Activated CD8-positive, alpha-beta memory T cell treated with anti-CD3 and anti-CD28 coated beads, Interleukin-2, amount 10 ng/mL, durations not matched to agents 7 days and 5 days (primary cell): ENCODE measurements at regions of chr2 and their contacts with region 1.

Region 1: GRCh38 chr2:25331686-25332365 is 9.9 kb downstream of the DNMT3A start:
- DNase-seq: no peak
- ATAC-seq: no peak
- H3K4me3 Mint-ChIP-seq: no peak overlapping the region
- H3K27ac Mint-ChIP-seq: no peak overlapping the region
- H3K4me1 Mint-ChIP-seq: peaks cover 38% of the 10 kb centered on the region
- H3K27me3 Mint-ChIP-seq: no peaks in the 10 kb centered on the region

Region 2: GRCh38 chr2:25145803-25146202 is 186.0 kb before region 1 on chr2:
- CTCF ChIA-PET with region 1: no interaction called
- DNase-seq: peak; percentile 48
- ATAC-seq: peak; percentile 80
- H3K4me3 Mint-ChIP-seq: no peak overlapping the region
- H3K27ac Mint-ChIP-seq: no peak overlapping the region
- H3K4me1 Mint-ChIP-seq: peaks cover 7% of the 10 kb centered on the region
- H3K27me3 Mint-ChIP-seq: peaks cover 15% of the 10 kb centered on the region

Region 3: GRCh38 chr2:25342372-25343186 is 10.8 kb after region 1 on chr2:
- CTCF ChIA-PET with region 1: interaction called, 10 read pairs
- DNase-seq: peak; percentile 89
- ATAC-seq: peak; percentile 91
- H3K4me3 Mint-ChIP-seq: peak overlapping the region; percentile 71
- H3K27ac Mint-ChIP-seq: peak overlapping the region; percentile 69
- H3K4me1 Mint-ChIP-seq: peaks cover 30% of the 10 kb centered on the region
- H3K27me3 Mint-ChIP-seq: no peaks in the 10 kb centered on the region